ENCODE measurements at regions of chr19 and their contacts with region 1.

Region 1: GRCh38 chr19:48842789-48843162 is 6.5 kb upstream of the HSD17B14 start:
- DNase-seq: peak; percentile 69
- CTCF ChIP-seq: peak; percentile 79

Region 2: DNA sequence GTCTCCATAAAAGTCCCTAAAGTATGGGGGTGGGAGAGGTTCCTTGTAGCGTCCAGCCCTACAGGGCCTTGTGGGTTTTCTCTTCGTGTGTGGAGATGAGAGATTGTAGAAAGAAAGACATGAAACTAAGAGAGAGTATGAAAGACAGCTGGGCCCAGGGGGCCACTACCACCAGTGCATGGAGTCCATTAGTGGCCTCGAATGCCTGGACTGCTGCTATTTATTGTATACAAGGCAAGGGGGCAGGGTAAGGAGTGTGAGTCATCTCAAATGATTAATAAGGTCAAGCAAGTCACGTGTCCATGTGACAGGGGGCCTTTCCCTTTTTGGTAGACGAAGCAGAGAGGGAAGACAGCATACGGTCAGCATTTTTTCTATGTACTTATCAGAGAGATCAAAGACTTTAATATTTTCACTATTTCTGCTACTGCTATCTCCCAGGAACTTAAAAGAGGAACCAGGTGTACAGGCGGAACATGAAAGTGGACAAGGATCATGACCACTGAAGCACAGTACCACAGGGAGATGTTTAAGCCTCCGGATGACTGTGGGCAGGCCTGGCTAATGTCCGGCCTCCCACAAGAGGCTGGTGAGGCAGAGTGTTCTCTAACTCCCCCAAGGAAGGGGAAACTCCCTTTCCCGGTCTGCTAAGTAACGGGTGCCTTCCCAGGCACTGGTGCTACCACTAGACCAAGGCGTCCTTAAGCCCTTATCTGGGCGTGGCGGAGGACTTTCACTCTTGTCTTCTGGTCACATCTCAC is 62.0 kb before region 1 on chr19:
- CTCF ChIA-PET with region 1: interaction called, 43 read pairs
- POLR2A ChIA-PET with region 1: no interaction called
- DNase-seq: no peak
- CTCF ChIP-seq: no peak

Region 3: DNA sequence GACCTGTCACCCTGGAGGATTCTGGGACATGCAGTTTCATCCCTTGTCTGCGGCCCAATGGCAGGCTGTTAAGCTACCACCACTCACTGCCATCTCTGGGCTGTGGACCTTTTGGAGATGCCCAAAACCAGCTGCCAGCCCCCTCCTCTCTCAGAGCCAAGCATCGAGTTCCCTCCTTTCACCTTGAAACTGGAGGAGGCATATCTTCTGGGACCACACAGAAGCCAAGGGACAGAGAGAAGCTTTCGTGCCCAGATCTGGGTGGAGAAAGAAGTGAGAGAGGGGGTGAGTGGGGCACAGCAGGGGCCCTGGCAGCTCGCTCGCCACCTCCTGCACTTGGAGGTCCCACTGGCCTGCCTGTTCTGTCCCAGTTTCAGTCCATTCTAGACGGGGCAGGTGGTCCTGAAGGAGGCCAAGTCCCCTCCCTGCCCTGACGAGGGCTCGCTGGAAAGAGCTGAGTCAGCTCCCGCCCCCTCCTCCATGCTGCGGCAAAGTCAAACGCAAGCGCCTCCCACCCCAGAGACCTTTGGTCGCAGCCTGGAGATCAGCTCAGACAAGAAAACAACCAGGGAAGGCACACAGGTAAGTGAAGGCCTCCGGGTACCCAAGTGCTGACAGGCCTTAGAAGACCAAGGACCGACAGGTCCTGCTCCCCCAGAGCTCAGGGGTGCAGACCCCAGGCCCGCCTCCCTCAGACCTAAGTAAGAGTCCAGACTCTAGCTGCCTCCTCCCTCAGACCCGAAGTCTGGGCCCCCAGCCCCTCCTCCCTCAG is 35.8 kb before region 1 on chr19:
- CTCF ChIA-PET with region 1: interaction called, 26 read pairs
- POLR2A ChIA-PET with region 1: interaction called, 5 read pairs
- DNase-seq: no peak
- CTCF ChIP-seq: no peak

Region 4: GRCh38 chr19:48826606-48827020 is 16.2 kb before region 1 on chr19:
- CTCF ChIA-PET with region 1: interaction called, 23 read pairs
- POLR2A ChIA-PET with region 1: no interaction called
- DNase-seq: no peak
- CTCF ChIP-seq: no peak

Region 5: GRCh38 chr19:48872182-48872883 is 29.6 kb after region 1 on chr19 and contains the start of gene PPP1R15A:
- CTCF ChIA-PET with region 1: interaction called, 24 read pairs
- POLR2A ChIA-PET with region 1: interaction called, 13 read pairs
- DNase-seq: peak; percentile 97
- CTCF ChIP-seq: no peak

Region 6: DNA sequence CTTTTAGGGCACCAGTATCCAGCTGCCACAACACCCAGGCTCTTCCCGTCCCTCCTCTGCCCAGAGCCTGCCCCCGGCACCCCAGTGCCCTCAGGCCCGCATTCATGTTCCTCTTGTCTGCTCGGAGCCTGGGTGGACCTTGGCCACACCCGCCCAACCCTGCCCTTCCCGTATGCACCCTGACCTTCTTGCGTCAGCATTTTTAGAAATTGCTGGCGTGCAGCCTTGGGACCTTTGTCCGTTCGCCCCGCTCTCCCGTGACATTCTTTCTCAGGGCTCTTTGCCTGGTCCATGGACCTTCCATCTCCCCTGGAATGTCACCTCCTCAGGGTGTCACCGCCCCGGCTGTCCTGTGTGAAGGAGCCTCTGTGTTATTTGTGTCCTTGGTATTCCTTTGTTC is 64.9 kb after region 1 on chr19:
- CTCF ChIA-PET with region 1: no interaction called
- POLR2A ChIA-PET with region 1: no interaction called
- DNase-seq: no peak
- CTCF ChIP-seq: no peak

Region 7: GRCh38 chr19:48993175-48994034 is 150.6 kb after region 1 on chr19 and contains the starts of genes GYS1 and RUVBL2:
- CTCF ChIA-PET with region 1: interaction called, 24 read pairs
- POLR2A ChIA-PET with region 1: no interaction called
- DNase-seq: peak; percentile 99
- CTCF ChIP-seq: peak; percentile 91

Region 8: DNA sequence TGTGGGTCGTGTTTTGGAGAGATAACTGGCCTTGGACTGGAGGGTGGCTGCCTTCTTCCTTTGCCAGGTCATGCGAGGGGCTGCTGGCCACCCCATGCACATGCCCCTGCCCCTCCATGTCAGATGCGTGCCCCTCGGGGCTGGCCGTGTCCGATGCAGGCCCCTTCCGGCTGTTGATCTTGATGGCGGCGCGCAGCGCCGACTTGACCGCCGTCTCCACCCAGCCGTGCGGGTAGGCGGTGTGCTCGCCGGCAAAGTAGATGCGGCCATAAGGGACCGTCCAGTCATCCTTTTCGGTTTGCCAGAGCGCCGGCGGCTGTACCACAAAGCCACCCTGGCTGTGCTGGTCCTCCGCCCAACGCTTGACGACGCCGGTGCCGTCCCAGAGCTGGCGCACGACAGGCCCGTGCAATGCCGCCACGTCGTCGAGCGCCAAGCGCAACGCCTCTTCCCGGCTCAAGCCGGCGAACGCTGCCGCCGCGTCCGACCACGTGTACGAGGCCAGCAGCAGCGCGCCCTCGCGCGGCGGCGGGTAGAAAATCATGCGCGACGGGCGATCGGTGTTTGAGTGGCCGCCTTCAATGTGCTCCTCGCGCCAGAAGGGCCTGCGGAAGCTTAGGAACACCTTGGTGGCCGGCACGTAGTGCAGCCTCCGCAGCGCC is 1047.0 kb after region 1 on chr19:
- CTCF ChIA-PET with region 1: no interaction called
- POLR2A ChIA-PET with region 1: no interaction called
- DNase-seq: peak; percentile 60
- CTCF ChIP-seq: peak; percentile 79